Head of caudate nucleus (tissue), 42 donors: ENCODE measurements at regions of chr7 and their contacts with region 1.

Region 1: DNA sequence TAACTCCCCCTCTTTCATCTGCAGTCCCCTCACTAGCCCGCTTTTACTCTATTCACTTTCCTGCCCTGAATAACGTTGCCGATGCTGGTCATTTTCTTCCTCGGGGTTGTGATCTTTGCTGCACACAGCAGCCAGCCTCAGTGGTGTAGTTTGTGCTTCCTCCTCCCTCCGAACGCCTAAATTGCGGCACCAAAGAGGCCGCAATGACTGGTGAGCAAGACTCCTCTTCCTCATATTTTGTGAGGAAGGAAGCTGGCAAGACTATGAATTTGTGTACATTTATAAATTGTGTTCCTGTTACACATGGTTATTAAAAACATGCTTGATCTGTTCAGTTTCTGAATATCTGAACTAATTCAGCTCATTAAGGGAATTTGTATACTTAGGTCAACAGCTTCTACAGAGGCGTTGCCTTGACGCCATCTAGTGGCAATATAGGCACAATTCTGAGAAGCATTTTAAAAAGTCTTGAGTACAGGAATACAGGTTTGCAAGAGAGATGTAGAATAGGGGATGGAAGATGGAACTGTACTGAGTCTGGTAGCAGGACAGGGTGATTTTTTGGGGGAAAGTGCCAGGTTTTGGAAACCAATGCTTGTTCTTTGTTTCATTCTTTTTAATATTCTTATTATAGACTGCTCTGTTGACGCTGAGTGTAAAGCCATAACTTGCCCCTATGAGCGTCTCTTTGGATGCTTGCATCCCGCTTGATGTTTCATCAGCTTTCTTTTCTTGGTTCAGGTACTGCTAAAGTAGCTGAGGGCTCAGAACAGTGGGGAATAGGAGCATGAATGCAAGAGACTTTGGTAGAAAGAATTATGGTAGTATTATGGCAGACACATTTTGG is 4.1 kb upstream of the TAS2R5 start:
- DNase-seq: peak in 28 of 42 donors; percentile 5 to 74 (median 38)

Region 2: DNA sequence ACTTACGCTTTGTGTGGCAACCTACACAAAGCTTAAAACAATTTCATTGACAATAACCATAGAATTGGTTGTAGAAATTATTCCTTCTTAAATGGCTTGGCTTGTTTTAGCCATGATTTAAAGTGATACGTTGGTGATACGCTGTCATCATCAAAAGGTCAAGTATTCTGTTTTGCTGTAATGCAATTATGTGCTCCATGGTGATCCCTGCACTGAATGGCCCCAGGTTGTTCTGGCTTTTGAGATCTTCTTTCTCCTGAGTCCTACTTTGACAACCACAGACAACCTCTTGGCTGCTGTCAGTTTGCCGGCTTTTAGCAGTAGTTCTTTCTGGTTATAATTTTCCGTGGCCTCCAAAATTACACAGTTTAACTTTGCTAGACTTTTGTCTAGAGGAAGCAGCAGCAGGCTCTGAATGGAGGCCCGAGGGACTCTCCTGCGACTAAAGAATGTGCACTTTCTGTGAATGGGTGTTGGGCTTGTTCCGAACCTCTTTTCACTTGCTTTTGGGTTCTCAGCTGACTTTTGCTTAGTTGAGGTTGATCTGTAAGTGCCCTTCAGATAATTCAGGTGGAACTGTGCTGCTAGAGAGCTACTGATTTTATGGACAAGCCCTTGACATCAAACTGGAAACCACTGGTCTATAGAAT is 607.3 kb before region 1 on chr7:
- intact Hi-C with region 1: no loop called
- DNase-seq: no peak

Region 3: GRCh38 chr7:141659501-141659900 is 126.4 kb before region 1 on chr7:
- intact Hi-C with region 1: loop called (anchors 5 kb)
- DNase-seq: no peak

Region 4: DNA sequence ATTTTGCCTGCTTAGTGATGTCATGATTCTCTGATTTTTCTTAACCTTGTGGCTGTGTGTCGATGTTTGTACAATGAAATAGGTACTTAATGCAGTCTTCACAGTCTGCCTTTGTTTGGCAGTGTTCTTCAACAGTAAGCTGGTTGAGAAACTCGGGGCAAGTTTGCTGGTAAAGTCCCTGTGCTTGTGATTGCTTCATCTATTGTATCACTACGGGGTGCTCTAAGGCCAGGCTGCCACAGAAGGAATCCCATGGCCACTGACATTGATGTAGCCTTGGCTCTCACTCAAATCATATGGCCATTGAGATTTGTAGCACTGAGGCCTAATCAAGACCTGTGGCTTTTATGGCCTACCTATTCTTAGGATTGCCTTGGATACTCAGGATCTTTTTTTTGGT is 88.9 kb after region 1 on chr7:
- intact Hi-C with region 1: no loop called
- DNase-seq: no peak

Region 5: DNA sequence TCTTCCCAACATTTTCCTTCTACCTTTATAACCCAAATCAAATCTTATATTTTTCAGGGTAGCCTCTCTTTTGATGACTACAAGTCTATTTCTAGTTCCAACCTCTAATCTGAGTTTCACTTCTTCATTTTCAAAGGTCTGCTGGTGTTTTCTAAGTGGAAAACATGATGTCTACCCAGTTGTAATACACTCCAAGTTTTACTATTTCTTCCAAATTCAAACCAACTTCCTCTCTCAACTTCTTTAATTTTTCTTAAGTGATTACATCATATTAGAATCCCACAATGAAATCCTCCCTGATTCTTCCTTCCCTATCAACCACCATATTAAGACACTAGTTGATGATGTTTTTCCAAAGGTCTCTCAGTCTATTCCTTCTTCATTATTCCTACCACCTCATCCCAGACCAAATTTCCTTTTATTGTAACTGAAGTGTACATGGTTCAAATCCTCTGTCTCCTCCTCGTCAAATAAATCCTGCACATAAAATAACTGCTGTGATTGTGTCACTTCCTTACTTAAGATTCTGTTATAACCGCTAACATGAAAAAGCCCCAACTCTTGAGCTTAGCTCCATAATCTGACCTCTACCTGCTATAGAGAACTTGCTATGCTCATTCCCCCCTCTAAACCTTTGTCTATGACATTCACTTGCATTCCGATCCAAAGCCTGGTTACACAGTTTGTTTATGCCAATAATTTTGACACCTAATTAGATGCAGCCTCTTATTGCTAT is 174.9 kb after region 1 on chr7:
- intact Hi-C with region 1: no loop called
- DNase-seq: no peak